Activated CD4-positive, alpha-beta memory T cell treated with anti-CD3 and anti-CD28 coated beads for 36 hours (primary cell): ENCODE measurements at regions of chr16 and their contacts with region 1.

Region 1: GRCh38 chr16:57475711-57476339 is 10.5 kb downstream of the DOK4 start:
- DNase-seq: peak; percentile 96
- H3K4me3 Mint-ChIP-seq: peak overlapping the region; percentile 6
- H3K27ac Mint-ChIP-seq: peak overlapping the region; percentile 45
- H3K4me1 Mint-ChIP-seq: peaks cover 14% of the 10 kb centered on the region
- H3K27me3 Mint-ChIP-seq: no peaks in the 10 kb centered on the region

Region 2: GRCh38 chr16:57447186-57447962 is 28.5 kb before region 1 on chr16 and contains the starts of genes CIAPIN1 and COQ9:
- CTCF ChIA-PET with region 1: interaction called, 11 read pairs
- POLR2A ChIA-PET with region 1: no interaction called
- intact Hi-C with region 1: no loop called
- DNase-seq: peak; percentile 96
- H3K4me3 Mint-ChIP-seq: peak within 1 kb of the TSS; percentile 91
- H3K27ac Mint-ChIP-seq: peak within 1 kb of the TSS; percentile 70
- H3K4me1 Mint-ChIP-seq: peaks cover 28% of the 10 kb centered on the region
- H3K27me3 Mint-ChIP-seq: no peaks in the 10 kb centered on the region
- total RNA-seq, gene CIAPIN1: 34.8 to 38.5 TPM
- total RNA-seq, gene COQ9: 29.8 to 33.0 TPM

Region 3: DNA sequence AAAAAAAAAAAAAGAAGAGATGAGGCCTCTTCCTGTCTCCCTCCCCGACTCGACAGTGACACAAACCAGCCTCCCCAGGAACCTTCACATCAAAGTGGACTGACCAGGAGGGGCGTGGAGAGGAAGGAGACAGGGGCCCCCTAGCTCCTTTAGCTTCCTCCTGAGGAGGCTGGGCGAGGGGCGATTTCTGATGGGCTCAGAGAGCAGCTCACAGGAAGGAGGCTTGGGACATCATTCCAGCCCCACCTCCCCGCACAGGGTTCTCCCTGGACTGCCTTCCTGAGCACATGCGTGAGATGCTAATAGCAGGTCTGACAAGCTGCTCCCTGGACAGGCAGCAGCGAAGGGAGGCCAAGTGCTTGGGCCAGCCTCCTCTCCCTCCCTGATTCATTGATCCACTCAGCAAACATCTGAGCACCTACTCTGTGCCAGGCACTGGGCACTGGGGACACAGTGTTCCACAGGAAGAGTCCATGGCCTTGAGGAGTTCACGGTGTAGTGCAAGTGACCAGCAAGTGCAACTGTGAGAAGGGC is 24.8 kb after region 1 on chr16:
- CTCF ChIA-PET with region 1: no interaction called
- POLR2A ChIA-PET with region 1: no interaction called
- intact Hi-C with region 1: no loop called
- DNase-seq: no peak
- H3K4me3 Mint-ChIP-seq: no peak overlapping the region
- H3K27ac Mint-ChIP-seq: no peak overlapping the region
- H3K4me1 Mint-ChIP-seq: peaks cover 11% of the 10 kb centered on the region
- H3K27me3 Mint-ChIP-seq: no peaks in the 10 kb centered on the region

Region 4: DNA sequence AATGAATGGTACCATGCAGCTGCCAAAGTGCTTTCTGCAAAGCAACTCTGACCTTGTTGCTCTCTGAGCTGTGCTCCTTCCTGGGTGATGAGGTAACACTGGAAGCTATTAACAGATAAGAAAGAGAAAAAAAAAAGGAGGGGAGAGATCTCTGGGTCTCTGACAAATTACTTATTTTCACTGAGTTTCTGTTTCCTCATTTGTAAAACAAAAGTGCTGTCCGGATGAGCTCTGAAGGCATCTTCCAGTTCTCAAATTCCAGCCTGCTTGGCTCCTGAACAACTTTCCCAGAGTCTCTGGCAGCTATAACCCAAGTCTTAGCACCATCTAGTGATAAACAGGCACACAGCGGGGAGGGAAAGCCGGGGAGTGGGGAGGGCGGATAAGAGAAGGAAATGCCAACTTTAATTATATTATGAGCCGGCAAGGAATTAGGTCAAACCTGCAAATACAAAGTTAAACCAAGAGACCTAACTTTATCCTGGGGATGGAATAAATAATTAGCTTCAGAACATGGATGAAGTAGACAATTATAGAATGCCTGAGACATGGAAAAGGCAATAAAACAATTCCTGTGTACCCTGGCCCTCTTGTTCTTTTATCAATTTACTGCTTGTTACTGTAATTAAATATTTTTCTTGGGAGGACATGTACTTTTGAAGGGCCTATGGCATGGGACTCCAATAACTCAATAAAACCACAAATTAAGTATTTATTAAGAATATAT is 387.8 kb after region 1 on chr16:
- CTCF ChIA-PET with region 1: no interaction called
- POLR2A ChIA-PET with region 1: no interaction called
- intact Hi-C with region 1: no loop called
- DNase-seq: peak; percentile 16
- H3K4me3 Mint-ChIP-seq: no peak overlapping the region
- H3K27ac Mint-ChIP-seq: no peak overlapping the region
- H3K4me1 Mint-ChIP-seq: no peaks in the 10 kb centered on the region
- H3K27me3 Mint-ChIP-seq: peaks cover 14% of the 10 kb centered on the region